ENCODE measurements at regions of chr4 and their contacts with region 1.

Region 1: DNA sequence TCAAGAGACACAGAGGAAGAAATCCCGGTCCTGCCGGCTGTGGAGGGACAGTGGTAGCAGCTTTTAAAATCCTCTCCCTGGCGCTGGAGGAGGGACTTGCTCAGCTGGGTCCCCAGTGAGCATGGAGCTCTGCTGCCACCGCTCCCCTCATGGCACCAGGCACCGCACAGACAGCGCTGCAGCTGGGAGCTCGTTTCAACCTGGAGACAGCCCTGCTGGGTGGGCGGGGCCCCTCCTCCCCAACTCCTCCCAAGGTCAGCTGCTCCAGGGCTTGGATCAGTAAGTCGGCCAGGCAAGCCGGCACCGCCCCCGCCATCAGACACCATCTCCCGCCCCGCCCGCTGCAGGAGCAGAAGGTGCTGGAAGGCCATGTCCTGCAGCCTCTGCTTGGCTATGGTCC is 16.4 kb downstream of the ZFYVE28 start:
- DNase-seq: peak; percentile 74 to 88
- H3K4me3 ChIP-seq: peak overlapping the region in 3 of 4 experiments; percentile 5 to 44 (median 19); a peak in 3 of 8 replicates
- H3K27ac ChIP-seq: no peak overlapping the region
- H3K4me1 ChIP-seq: peaks cover 0 to 23% (median 16%) of the 10 kb centered on the region in 4 experiments; a peak in 6 of 7 replicates
- H3K27me3 ChIP-seq: no peaks in the 10 kb centered on the region; a peak in 1 of 7 replicates
- CTCF ChIP-seq: no peak
- EP300 ChIP-seq: no peak
- POLR2A ChIP-seq: no peak
- RAD21 ChIP-seq: no peak; a peak in 1 of 4 replicates

Region 2: DNA sequence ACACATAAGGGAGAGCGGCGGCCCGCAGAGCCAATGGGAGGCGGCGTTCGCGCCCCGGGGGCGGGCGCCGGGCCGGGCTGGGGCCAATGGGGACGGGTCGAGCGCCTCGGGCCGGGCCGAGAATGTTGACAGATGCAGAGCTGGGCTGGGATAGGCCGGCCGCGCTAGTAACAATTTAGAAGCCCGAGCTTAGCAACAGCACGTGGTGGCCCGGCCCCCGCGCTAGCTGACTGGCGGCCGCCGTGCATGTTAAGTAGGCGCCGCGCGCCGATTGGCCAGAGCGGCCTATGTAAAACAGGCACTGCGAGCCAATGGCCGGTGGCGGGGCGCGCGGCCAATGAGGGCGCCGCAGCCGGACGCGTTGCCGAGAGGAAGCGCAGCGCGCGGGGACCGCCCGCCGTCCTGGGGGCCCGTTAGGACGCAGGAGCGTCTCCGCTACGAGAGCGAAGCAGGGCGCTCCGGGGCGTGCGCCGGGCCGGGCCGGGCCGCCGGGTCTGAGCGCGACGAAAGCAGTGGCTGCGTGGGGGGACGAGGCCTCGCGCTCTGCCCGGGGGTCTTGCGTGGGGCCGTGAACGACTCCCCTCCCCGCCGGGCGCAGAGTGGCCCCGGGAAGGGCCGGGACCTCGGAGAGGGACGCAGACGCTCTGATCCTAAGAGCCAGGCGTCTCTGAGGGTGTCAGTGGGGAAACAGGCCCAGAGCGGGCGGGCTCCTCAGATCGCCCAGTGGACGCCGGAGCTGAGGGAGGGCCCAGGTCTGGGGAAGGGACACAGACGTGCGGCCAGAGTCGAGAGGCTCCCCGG is 139.7 kb before region 1 on chr4:
- CTCF ChIA-PET with region 1: no interaction called
- POLR2A ChIA-PET with region 1: no interaction called
- DNase-seq: peak; percentile 97 to 98
- H3K4me3 ChIP-seq: peak overlapping the region; percentile 40 to 89 (median 56)
- H3K27ac ChIP-seq: 0 out of 2 replicates have a peak overlapping the region, but pooled peaks have one; percentile 7
- H3K4me1 ChIP-seq: peaks cover 0 to 9% (median 4%) of the 10 kb centered on the region in 4 experiments; a peak in 5 of 7 replicates
- H3K27me3 ChIP-seq: no peaks in the 10 kb centered on the region
- CTCF ChIP-seq: 0 out of 4 replicates have a peak, but pooled peaks of 1 of the 3 experiments have one; percentile 2
- EP300 ChIP-seq: no peak
- POLR2A ChIP-seq: no peak
- RAD21 ChIP-seq: no peak

Region 3: DNA sequence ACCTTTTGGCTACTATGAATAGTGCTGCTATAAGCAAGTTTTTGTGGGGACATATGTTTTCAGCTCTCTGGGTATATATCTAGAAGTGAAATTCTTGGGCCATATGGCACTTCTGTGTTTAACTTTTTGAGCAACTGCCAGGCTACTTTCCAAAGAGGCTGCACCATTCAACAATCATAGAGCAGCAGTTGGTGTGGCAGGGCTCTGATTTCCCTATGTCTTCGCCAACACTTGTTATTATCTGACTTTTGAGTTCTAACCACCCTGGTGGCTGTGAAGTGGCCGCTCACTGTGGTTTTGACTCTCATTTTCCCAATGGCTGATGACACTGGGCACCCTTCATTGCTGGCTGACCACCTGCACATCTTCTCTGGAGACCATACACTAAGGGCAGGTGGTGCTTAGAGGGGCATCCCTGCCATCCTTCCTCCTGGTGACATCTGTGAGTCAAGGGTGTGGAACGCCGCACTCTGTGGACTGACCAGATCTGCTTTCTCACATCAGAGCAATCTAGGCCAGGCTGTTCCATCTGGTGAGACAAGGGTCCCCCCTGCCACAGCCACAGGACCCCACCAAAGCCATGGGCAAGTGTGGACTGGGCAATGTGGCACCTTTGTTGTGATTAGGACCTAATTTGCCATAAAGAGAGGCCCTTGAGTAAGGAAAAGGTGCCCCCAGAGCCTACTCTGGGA is 33.1 kb before region 1 on chr4:
- CTCF ChIA-PET with region 1: no interaction called
- POLR2A ChIA-PET with region 1: no interaction called
- DNase-seq: no peak
- H3K4me3 ChIP-seq: no peak overlapping the region
- H3K27ac ChIP-seq: no peak overlapping the region
- H3K4me1 ChIP-seq: no peaks in the 10 kb centered on the region; a peak in 1 of 7 replicates
- H3K27me3 ChIP-seq: no peaks in the 10 kb centered on the region
- CTCF ChIP-seq: no peak
- EP300 ChIP-seq: no peak
- POLR2A ChIP-seq: no peak
- RAD21 ChIP-seq: no peak

Region 4: GRCh38 chr4:2388429-2389182 is 13.4 kb before region 1 on chr4:
- CTCF ChIA-PET with region 1: interaction called, 11 read pairs
- POLR2A ChIA-PET with region 1: interaction called, 4 read pairs
- DNase-seq: no peak
- H3K4me3 ChIP-seq: no peak overlapping the region
- H3K27ac ChIP-seq: no peak overlapping the region
- H3K4me1 ChIP-seq: peaks cover 0 to 24% (median 10%) of the 10 kb centered on the region in 4 experiments; a peak in 6 of 7 replicates
- H3K27me3 ChIP-seq: no peaks in the 10 kb centered on the region
- CTCF ChIP-seq: no peak
- EP300 ChIP-seq: no peak
- POLR2A ChIP-seq: no peak
- RAD21 ChIP-seq: no peak